Caco-2 (cell line): ENCODE measurements at regions of chr17 and their contacts with region 1.

Region 1: GRCh38 chr17:16285957-16286640 is 67.2 kb downstream of the CENPV start:
- DNase-seq: peak; percentile 88 to 93
- H3K4me3 ChIP-seq: no peak overlapping the region
- H3K4me3 Mint-ChIP-seq: peak overlapping the region; percentile 8
- H3K27ac Mint-ChIP-seq: peak overlapping the region; percentile 71
- H3K4me1 ChIP-seq: peaks cover 47% of the 10 kb centered on the region
- H3K4me1 Mint-ChIP-seq: peaks cover 28% of the 10 kb centered on the region
- H3K27me3 ChIP-seq: no peaks in the 10 kb centered on the region
- H3K27me3 Mint-ChIP-seq: no peaks in the 10 kb centered on the region
- CTCF ChIP-seq: peak; percentile 47 to 76

Region 2: GRCh38 chr17:16215273-16215964 is 70.7 kb before region 1 on chr17 and contains the start of gene NCOR1:
- CTCF ChIA-PET with region 1: interaction called, 5 read pairs
- POLR2A ChIA-PET with region 1: interaction called, 8 read pairs
- intact Hi-C with region 1: loop called (anchors 5 kb)
- DNase-seq: peak; percentile 87 to 89
- H3K4me3 ChIP-seq: peak within 1 kb of the TSS; percentile 71
- H3K4me3 Mint-ChIP-seq: peak within 1 kb of the TSS; percentile 95
- H3K27ac Mint-ChIP-seq: peak within 1 kb of the TSS; percentile 53
- H3K4me1 ChIP-seq: no peaks in the 10 kb centered on the region; the same call in 1 of the 2 replicates
- H3K4me1 Mint-ChIP-seq: no peaks in the 10 kb centered on the region
- H3K27me3 ChIP-seq: no peaks in the 10 kb centered on the region
- H3K27me3 Mint-ChIP-seq: no peaks in the 10 kb centered on the region
- CTCF ChIP-seq: peak in 1 of 2 experiments; percentile 36
- total RNA-seq, gene NCOR1: 90.8 and 95.8 TPM in 2 replicates

Region 3: DNA sequence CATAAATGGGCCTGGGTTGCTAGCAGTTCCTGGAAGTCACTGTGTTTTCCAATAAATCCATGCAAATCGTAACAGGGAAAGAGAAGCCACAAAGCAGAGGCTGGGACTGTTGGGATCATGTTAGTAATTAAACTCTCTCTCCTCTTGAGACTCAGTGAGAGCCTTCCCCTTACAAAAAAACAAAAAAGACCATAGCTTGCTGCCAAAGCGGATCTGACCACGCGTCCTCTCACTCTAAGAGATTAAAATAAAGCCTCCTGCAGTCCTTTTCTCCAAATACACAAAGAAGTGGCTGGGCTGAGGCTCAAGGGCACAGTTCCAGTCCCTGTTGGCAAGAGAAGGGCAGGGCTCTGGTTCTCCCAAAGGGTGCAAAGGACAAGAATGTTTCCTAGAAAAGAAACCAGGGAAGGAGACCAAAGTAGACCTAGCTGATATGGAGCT is 30.6 kb before region 1 on chr17:
- CTCF ChIA-PET with region 1: no interaction called
- POLR2A ChIA-PET with region 1: no interaction called
- intact Hi-C with region 1: no loop called
- DNase-seq: no peak
- H3K4me3 ChIP-seq: no peak overlapping the region
- H3K4me3 Mint-ChIP-seq: no peak overlapping the region
- H3K27ac Mint-ChIP-seq: no peak overlapping the region
- H3K4me1 ChIP-seq: no peaks in the 10 kb centered on the region
- H3K4me1 Mint-ChIP-seq: no peaks in the 10 kb centered on the region
- H3K27me3 ChIP-seq: no peaks in the 10 kb centered on the region
- H3K27me3 Mint-ChIP-seq: no peaks in the 10 kb centered on the region
- CTCF ChIP-seq: no peak

Region 4: GRCh38 chr17:16297367-16298139 is 11.5 kb after region 1 on chr17:
- CTCF ChIA-PET with region 1: interaction called, 6 read pairs
- POLR2A ChIA-PET with region 1: interaction called, 11 read pairs
- intact Hi-C with region 1: loop called (anchors 1 kb)
- DNase-seq: peak; percentile 20 to 45
- H3K4me3 ChIP-seq: no peak overlapping the region
- H3K4me3 Mint-ChIP-seq: peak overlapping the region; percentile 54
- H3K27ac Mint-ChIP-seq: peak overlapping the region; percentile 84
- H3K4me1 ChIP-seq: peaks cover 60% of the 10 kb centered on the region
- H3K4me1 Mint-ChIP-seq: peaks cover 25% of the 10 kb centered on the region
- H3K27me3 ChIP-seq: no peaks in the 10 kb centered on the region
- H3K27me3 Mint-ChIP-seq: no peaks in the 10 kb centered on the region
- CTCF ChIP-seq: no peak

Region 5: GRCh38 chr17:16304830-16305229 is 18.7 kb after region 1 on chr17:
- CTCF ChIA-PET with region 1: interaction called, 6 read pairs
- POLR2A ChIA-PET with region 1: interaction called, 3 read pairs
- intact Hi-C with region 1: loop called (anchors 2 kb)
- DNase-seq: peak in 1 of 2 experiments; percentile 48
- H3K4me3 ChIP-seq: no peak overlapping the region
- H3K4me3 Mint-ChIP-seq: no peak overlapping the region
- H3K27ac Mint-ChIP-seq: no peak overlapping the region
- H3K4me1 ChIP-seq: peaks cover 9% of the 10 kb centered on the region
- H3K4me1 Mint-ChIP-seq: peaks cover 9% of the 10 kb centered on the region
- H3K27me3 ChIP-seq: no peaks in the 10 kb centered on the region
- H3K27me3 Mint-ChIP-seq: no peaks in the 10 kb centered on the region
- CTCF ChIP-seq: peak; percentile 39 to 54

Region 6: DNA sequence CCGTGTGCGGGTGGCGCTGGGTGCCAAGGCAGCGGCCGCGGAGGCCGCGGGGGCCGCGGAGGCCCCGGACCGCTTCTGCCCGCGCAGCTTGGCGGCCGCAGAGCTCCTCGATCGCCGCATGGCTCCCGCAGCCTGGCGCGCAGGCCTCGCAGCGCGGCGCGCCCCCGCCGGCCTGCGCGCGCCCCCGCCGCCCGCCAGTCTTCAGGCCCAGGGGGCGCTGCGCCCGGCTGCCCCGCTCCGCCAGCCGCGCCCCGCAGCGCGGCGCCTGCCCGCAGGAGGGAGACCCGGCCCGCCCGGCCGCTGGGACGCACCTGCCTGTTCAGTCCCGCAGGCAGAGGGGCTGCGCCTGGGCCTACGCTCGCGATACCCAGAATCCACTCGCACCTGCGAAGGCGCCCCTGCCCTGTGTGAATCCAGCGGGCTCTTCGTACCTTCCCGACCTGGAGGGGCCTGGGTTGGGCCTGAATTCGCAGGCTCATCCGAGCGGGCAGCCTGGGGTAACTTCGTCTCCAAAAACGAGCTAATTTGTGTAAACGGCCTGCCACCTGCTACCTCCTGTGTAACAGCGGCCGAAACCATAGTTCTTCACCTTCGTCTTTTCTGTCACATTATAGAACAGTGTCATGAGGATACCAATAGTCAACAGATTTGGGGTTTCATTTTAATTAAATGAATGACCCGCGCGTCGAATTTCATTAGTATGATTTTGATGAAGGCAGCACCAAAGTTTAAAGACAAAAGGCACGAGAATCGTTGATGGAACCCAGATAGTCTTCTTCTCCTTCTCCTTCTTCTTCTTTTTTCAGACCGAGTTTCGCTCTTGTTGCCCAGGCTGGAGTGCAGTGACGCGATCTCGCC is 67.4 kb after region 1 on chr17 and contains the start of gene CENPV:
- CTCF ChIA-PET with region 1: interaction called, 3 read pairs
- POLR2A ChIA-PET with region 1: interaction called, 10 read pairs
- intact Hi-C with region 1: loop called (anchors 2 kb)
- DNase-seq: peak; percentile 74 to 82
- H3K4me3 ChIP-seq: peak within 1 kb of the TSS; percentile 56
- H3K4me3 Mint-ChIP-seq: peak within 1 kb of the TSS; percentile 93
- H3K27ac Mint-ChIP-seq: peak within 1 kb of the TSS; percentile 88
- H3K4me1 ChIP-seq: peaks cover 7% of the 10 kb centered on the region; the same call in 1 of the 2 replicates
- H3K4me1 Mint-ChIP-seq: no peaks in the 10 kb centered on the region
- H3K27me3 ChIP-seq: no peaks in the 10 kb centered on the region
- H3K27me3 Mint-ChIP-seq: no peaks in the 10 kb centered on the region
- CTCF ChIP-seq: no peak
- total RNA-seq, gene CENPV: 92.8 and 103 TPM in 2 replicates

Region 7: GRCh38 chr17:16380640-16381495 is 94.8 kb after region 1 on chr17 and contains the start of gene UBB:
- CTCF ChIA-PET with region 1: no interaction called
- POLR2A ChIA-PET with region 1: interaction called, 13 read pairs
- intact Hi-C with region 1: loop called (anchors 2 kb)
- DNase-seq: peak; percentile 98 to 99
- H3K4me3 ChIP-seq: peak within 1 kb of the TSS; percentile 72
- H3K4me3 Mint-ChIP-seq: peak within 1 kb of the TSS; percentile 93
- H3K27ac Mint-ChIP-seq: peak within 1 kb of the TSS; percentile 100
- H3K4me1 ChIP-seq: no peaks in the 10 kb centered on the region
- H3K4me1 Mint-ChIP-seq: peaks cover 7% of the 10 kb centered on the region
- H3K27me3 ChIP-seq: no peaks in the 10 kb centered on the region
- H3K27me3 Mint-ChIP-seq: no peaks in the 10 kb centered on the region
- CTCF ChIP-seq: no peak
- total RNA-seq, gene UBB: 1,900 and 1,904 TPM in 2 replicates